Endothelial cell of umbilical vein (primary cell): ENCODE measurements at regions of chr7 and their contacts with region 1.

Region 1: DNA sequence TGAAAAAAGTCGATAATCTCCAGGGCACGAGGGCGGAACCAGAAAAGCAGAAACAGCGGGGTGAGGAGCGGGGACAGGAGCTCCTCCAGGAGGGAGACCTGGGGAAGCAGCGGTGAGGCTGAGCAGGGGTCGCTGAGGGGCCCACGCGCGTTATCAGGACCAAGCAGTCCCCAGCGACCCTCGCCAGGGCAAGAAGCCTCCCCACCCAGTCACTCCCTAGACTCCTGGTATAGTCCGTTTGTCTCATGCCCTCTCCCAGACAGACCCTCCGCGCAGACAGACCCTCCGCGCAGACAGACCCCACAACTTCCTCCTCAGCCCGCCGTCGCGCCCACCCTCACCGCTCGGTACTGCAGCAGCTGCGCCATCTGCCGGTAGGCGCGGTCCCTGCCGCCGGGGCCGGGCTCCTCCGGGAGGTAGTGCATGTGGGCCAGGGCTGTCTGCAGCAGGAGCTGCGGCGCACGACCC is 6.3 kb downstream of the ATG9B start:
- DNase-seq: peak; percentile 58
- H3K4me3 ChIP-seq: no peak overlapping the region
- H3K27ac ChIP-seq: no peak overlapping the region
- H3K4me1 ChIP-seq: peaks cover 7% of the 10 kb centered on the region
- H3K27me3 ChIP-seq: peaks cover 12 to 14% of the 10 kb centered on the region in 2 experiments
- CTCF ChIP-seq: peak; percentile 98 to 99
- POLR2A ChIP-seq: no peak

Region 2: GRCh38 chr7:150778738-150779301 is 239.2 kb before region 1 on chr7:
- CTCF ChIA-PET with region 1: interaction called, 6 read pairs
- POLR2A ChIA-PET with region 1: no interaction called
- dilution Hi-C with region 1: no loop called
- intact Hi-C with region 1: loop called (anchors 1 kb)
- DNase-seq: peak; percentile 80
- H3K4me3 ChIP-seq: no peak overlapping the region
- H3K27ac ChIP-seq: no peak overlapping the region
- H3K4me1 ChIP-seq: no peaks in the 10 kb centered on the region
- H3K27me3 ChIP-seq: peaks cover 12 to 13% of the 10 kb centered on the region in 2 experiments
- CTCF ChIP-seq: peak; percentile 80 to 90
- POLR2A ChIP-seq: no peak

Region 3: GRCh38 chr7:150820578-150821198 is 197.3 kb before region 1 on chr7:
- CTCF ChIA-PET with region 1: no interaction called
- POLR2A ChIA-PET with region 1: no interaction called
- dilution Hi-C with region 1: no loop called
- intact Hi-C with region 1: no loop called
- DNase-seq: no peak
- H3K4me3 ChIP-seq: no peak overlapping the region
- H3K27ac ChIP-seq: no peak overlapping the region
- H3K4me1 ChIP-seq: no peaks in the 10 kb centered on the region
- H3K27me3 ChIP-seq: peaks cover 6 to 9% of the 10 kb centered on the region in 2 experiments
- CTCF ChIP-seq: no peak
- POLR2A ChIP-seq: no peak

Region 4: GRCh38 chr7:150974468-150975391 is 43.3 kb before region 1 on chr7:
- CTCF ChIA-PET with region 1: interaction called, 19 read pairs
- POLR2A ChIA-PET with region 1: no interaction called
- dilution Hi-C with region 1: no loop called
- intact Hi-C with region 1: no loop called
- DNase-seq: peak; percentile 12
- H3K4me3 ChIP-seq: peak overlapping the region in 1 of 3 experiments; percentile 8
- H3K27ac ChIP-seq: no peak overlapping the region
- H3K4me1 ChIP-seq: peaks cover 10% of the 10 kb centered on the region
- H3K27me3 ChIP-seq: peaks cover 18 to 25% of the 10 kb centered on the region in 2 experiments
- CTCF ChIP-seq: peak; percentile 35 to 51
- POLR2A ChIP-seq: no peak